Activated CD4-positive, alpha-beta T cell treated with anti-CD3 and anti-CD28 coated beads, Interleukin-2, amount 10 ng/mL, durations not matched to agents 24 days and 14 days (primary cell): ENCODE measurements at regions of chr1 and their contacts with region 1.

Region 1: GRCh38 chr1:66374561-66375111 is 159.3 kb upstream of the SGIP1 start:
- DNase-seq: peak; percentile 76
- H3K4me3 Mint-ChIP-seq: peak overlapping the region; percentile 82
- H3K27ac Mint-ChIP-seq: peak overlapping the region; percentile 94
- H3K4me1 Mint-ChIP-seq: peaks cover 59% of the 10 kb centered on the region
- H3K27me3 Mint-ChIP-seq: no peaks in the 10 kb centered on the region

Region 2: DNA sequence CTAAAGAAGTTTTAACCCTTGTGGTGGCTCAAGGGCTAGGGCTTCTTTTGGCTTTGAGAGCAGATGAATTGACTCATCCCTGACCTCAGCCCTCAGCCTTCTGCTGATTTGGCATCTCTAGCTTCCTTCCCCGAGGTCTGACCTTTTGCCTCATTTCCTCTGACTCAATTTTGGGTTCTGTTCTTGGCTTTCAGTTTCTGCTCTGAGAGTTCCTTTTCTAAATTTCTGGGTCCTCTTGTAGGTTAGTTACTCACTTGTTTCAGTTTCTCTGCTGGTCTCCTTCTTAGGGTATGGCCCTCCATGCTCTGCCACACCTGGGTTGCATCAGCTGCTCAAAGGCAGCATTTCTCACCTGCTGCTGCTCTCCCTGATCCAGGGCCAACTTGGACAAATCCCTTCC is 562.6 kb before region 1 on chr1:
- intact Hi-C with region 1: loop called (anchors 1 kb)
- DNase-seq: peak; percentile 91
- H3K4me3 Mint-ChIP-seq: peak overlapping the region; percentile 4
- H3K27ac Mint-ChIP-seq: peak overlapping the region; percentile 76
- H3K4me1 Mint-ChIP-seq: peaks cover 21% of the 10 kb centered on the region
- H3K27me3 Mint-ChIP-seq: peaks cover 15% of the 10 kb centered on the region

Region 3: DNA sequence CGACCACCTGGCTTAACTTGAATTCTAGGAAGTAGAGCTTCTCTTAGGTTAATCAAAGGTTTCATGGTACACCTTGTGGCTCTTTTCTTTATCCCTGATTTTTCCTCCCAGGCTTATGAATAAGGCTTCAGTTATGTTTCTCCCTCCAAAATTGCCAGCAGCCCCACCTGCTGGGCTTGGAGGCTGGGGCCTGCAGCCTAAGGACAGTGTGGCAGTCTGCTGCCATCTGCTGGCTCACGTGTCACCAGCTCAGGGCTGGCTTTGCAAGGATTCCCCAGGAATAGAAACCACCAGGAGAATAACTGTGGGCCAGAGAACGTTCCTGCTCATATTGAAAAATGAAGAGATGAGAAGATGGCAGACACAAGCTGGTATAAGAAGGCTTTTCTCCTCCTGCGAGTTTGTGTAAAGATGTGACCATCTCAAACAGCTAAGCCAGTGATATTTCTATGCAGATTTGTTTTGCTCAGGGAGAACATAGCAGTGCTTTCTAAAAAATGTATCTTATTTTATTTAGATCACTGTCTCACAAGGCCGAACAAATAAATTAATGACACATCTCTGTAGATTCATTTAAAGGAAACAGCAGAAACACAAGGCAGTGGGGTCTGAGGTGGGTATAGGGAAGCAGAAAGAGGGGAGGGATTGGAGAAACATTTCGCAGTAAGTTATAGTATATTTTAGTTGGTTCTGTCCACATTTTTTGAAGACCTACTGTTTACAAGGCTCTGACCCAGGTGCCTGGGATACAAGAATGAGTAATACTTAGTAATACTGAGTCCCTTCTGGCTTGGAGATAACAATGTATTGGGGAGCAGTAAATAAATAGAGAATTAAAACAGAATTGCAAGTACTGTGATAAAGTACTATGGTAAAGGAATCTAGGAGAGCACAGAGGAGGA is 131.7 kb before region 1 on chr1:
- intact Hi-C with region 1: loop called (anchors 2 kb)
- DNase-seq: peak; percentile 93
- H3K4me3 Mint-ChIP-seq: no peak overlapping the region
- H3K27ac Mint-ChIP-seq: no peak overlapping the region
- H3K4me1 Mint-ChIP-seq: peaks cover 25% of the 10 kb centered on the region
- H3K27me3 Mint-ChIP-seq: peaks cover 6% of the 10 kb centered on the region

Region 4: DNA sequence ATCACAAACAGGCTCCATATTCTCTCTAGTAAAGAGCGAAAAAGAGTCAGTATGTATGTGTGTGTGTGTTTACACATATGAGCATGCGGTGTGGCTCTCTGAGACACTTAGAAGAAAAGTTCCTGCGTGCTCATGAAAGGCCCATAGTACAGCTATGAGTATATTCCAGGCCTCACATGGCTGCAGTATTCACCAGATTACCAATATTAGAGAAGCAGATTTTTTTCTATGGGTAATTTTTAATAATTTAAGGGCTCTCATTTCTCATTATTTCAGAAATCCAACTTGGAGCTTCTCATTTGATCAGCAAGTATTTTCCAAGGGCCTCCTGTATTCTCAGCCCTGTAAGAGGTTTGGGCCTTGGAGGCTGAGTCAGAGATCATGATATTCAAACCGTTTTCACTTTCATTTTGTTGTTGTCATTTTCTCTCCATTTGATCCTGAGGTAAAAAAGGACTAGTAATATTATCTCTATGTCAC is 73.6 kb before region 1 on chr1:
- intact Hi-C with region 1: loop called (anchors 1 kb)
- DNase-seq: peak; percentile 80
- H3K4me3 Mint-ChIP-seq: peak overlapping the region; percentile 76
- H3K27ac Mint-ChIP-seq: peak overlapping the region; percentile 82
- H3K4me1 Mint-ChIP-seq: peaks cover 31% of the 10 kb centered on the region
- H3K27me3 Mint-ChIP-seq: no peaks in the 10 kb centered on the region

Region 5: DNA sequence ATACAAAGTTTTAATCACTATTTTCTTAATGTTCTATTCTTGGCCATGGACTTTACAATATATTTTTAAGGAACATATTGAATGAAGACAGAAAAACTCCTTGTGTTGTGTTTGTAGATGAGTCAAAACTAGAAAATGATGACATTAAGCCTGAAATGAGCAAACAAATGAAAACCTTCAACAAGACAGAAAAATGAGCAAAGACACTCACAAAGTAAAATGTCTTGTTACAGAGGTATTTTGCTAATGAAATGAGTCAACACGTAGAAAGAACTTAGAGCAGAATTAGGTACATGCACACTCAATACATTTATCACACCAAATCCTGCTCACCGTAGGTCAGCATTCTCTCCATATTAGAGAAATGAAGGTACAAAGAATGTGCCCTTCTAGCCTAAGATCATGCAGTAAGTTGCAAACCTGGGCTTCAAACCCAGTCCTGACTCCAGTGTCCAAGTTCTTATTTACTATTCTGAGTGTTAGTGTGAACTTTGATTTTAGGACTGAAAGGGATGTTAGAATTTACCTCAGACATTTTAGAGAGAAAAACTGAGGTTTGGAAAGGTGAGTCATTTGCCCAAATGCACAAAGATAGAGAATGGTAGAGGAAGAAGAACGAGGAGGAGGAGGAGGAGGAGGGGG is 25.4 kb after region 1 on chr1:
- intact Hi-C with region 1: loop called (anchors 1 kb)
- DNase-seq: no peak
- H3K4me3 Mint-ChIP-seq: peak overlapping the region; percentile 72
- H3K27ac Mint-ChIP-seq: peak overlapping the region; percentile 90
- H3K4me1 Mint-ChIP-seq: peaks cover 43% of the 10 kb centered on the region
- H3K27me3 Mint-ChIP-seq: no peaks in the 10 kb centered on the region

Region 6: DNA sequence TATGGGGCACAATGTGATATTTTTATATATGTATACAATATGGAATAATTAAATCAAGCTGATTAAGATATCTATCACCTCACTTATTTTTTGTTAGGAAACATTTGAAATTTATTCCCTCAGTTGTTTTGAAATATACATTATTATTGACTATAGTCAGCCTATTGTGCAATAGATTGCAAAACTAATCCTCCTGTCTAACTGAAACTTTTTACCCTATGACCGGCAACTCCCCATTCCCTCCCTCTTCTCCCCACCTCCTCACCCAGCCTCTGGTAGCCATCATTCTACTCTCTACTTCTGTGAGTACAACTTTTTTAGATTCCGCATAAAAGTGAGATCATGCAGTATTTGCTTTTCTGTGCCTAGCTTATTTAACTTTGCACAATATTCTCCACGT is 41.7 kb after region 1 on chr1:
- intact Hi-C with region 1: no loop called
- DNase-seq: no peak
- H3K4me3 Mint-ChIP-seq: no peak overlapping the region
- H3K27ac Mint-ChIP-seq: no peak overlapping the region
- H3K4me1 Mint-ChIP-seq: peaks cover 6% of the 10 kb centered on the region
- H3K27me3 Mint-ChIP-seq: no peaks in the 10 kb centered on the region

Region 7: DNA sequence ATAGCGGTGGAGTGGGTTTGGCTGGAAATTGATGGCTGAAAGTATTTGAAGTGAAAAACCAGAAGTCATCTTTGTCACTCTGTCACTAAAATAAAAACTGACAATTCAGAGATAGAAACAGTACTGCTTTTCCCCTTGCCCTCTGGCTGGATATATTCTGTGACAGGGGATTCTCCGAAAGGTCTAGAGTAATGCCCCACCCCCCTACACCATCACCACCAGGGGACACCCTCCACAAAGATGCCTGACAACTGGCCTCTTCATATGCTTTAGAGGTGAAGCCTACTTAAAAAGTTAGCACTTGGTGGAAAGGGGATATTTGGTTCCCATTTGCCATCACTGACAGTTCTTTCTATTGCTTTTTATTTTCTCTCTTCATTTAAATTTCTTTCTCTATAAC is 232.8 kb after region 1 on chr1:
- intact Hi-C with region 1: no loop called
- DNase-seq: no peak
- H3K4me3 Mint-ChIP-seq: no peak overlapping the region
- H3K27ac Mint-ChIP-seq: no peak overlapping the region
- H3K4me1 Mint-ChIP-seq: no peaks in the 10 kb centered on the region
- H3K27me3 Mint-ChIP-seq: peaks cover 10% of the 10 kb centered on the region

Region 8: DNA sequence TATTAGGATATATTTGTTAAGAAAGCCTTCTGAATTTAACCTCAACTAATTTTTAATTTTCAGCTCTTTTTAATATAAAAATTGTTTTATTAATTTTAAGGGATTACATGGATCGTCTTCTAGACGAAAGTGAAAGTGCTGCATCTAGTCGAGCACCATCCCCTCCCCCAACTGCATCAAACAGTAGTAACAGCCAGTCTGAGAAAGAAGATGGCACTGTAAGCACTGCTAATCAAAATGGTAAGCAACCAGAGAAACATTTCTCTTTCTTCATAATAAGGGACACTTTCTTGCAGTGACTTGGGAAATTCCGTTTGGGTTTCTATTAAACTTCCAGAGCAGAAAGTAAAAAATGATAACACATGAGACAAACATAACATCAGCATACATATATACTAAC is 607.0 kb after region 1 on chr1:
- intact Hi-C with region 1: no loop called
- DNase-seq: peak; percentile 88
- H3K4me3 Mint-ChIP-seq: peak overlapping the region; percentile 79
- H3K27ac Mint-ChIP-seq: peak overlapping the region; percentile 35
- H3K4me1 Mint-ChIP-seq: peaks cover 27% of the 10 kb centered on the region
- H3K27me3 Mint-ChIP-seq: no peaks in the 10 kb centered on the region

Region 9: GRCh38 chr1:67307251-67308060 is 932.8 kb after region 1 on chr1 and contains the start of gene IL12RB2:
- intact Hi-C with region 1: loop called (anchors 10 kb)
- DNase-seq: peak; percentile 93
- H3K4me3 Mint-ChIP-seq: peak within 1 kb of the TSS; percentile 97
- H3K27ac Mint-ChIP-seq: peak within 1 kb of the TSS; percentile 100
- H3K4me1 Mint-ChIP-seq: peaks cover 64% of the 10 kb centered on the region
- H3K27me3 Mint-ChIP-seq: no peaks in the 10 kb centered on the region
- total RNA-seq, gene IL12RB2: 138 and 146 TPM in 2 replicates